Aorta (tissue), 5 donors: ENCODE measurements at regions of chr20 and their contacts with region 1.

Region 1: GRCh38 chr20:58888521-58889333 is 36.2 kb downstream of the GNAS start:
- DNase-seq: peak; percentile 89 to 93
- ATAC-seq: peak; percentile 71
- H3K4me3 ChIP-seq: peak overlapping the region; percentile 37 to 95
- H3K27ac ChIP-seq: peak overlapping the region in 1 of 2 donors; percentile 52
- H3K4me1 ChIP-seq: no peaks in the 10 kb centered on the region
- H3K27me3 ChIP-seq: peaks cover 0 to 1% of the 10 kb centered on the region in 2 donors

Region 2: GRCh38 chr20:58538752-58539151 is 350.0 kb before region 1 on chr20:
- intact Hi-C with region 1: no loop called
- DNase-seq: no peak
- ATAC-seq: no peak
- H3K4me3 ChIP-seq: no peak overlapping the region
- H3K27ac ChIP-seq: no peak overlapping the region
- H3K4me1 ChIP-seq: no peaks in the 10 kb centered on the region
- H3K27me3 ChIP-seq: no peaks in the 10 kb centered on the region

Region 3: DNA sequence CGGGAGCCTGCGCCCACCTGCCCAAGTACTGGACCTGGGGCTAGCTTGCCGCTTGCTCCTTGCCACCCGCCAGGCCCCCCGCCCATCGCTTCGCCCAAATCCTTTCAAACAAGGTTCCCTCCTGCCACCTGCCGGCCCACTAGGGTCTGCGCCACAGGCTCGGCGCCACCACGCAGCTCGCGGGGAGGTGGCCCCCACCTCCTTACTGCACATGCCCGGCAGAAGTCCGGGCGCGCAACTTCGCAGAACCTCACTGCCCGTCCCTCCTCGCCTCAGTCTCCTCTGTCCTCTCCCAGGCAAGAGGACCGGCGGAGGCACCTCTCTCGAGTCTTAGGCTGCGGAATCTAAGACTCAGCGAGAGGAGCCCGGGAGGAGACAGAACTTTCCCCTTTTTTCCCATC is 49.3 kb before region 1 on chr20:
- intact Hi-C with region 1: no loop called
- DNase-seq: peak in 1 of 2 donors; percentile 78
- ATAC-seq: peak; percentile 36
- H3K4me3 ChIP-seq: no peak overlapping the region
- H3K27ac ChIP-seq: no peak overlapping the region
- H3K4me1 ChIP-seq: no peaks in the 10 kb centered on the region
- H3K27me3 ChIP-seq: no peaks in the 10 kb centered on the region

Region 4: GRCh38 chr20:58907399-58908137 is 18.8 kb after region 1 on chr20:
- intact Hi-C with region 1: loop called in 1 of 2 experiments (anchors 2 kb)
- DNase-seq: peak; percentile 89 to 94
- ATAC-seq: peak; percentile 95
- H3K4me3 ChIP-seq: no peak overlapping the region
- H3K27ac ChIP-seq: peak overlapping the region; percentile 54 to 88
- H3K4me1 ChIP-seq: no peaks in the 10 kb centered on the region
- H3K27me3 ChIP-seq: no peaks in the 10 kb centered on the region

Region 5: GRCh38 chr20:58980700-58981627 is 92.2 kb after region 1 on chr20 and contains the start of gene NELFCD:
- intact Hi-C with region 1: loop called (anchors 5 kb)
- DNase-seq: peak; percentile 92 to 97
- ATAC-seq: peak; percentile 94
- H3K4me3 ChIP-seq: peak within 1 kb of the TSS; percentile 80 to 87
- H3K27ac ChIP-seq: no peak within 1 kb of the TSS
- H3K4me1 ChIP-seq: peaks cover 0 to 4% of the 10 kb centered on the region in 2 donors
- H3K27me3 ChIP-seq: no peaks in the 10 kb centered on the region
- total RNA-seq, gene NELFCD: 40.5 to 50.1 TPM

Region 6: DNA sequence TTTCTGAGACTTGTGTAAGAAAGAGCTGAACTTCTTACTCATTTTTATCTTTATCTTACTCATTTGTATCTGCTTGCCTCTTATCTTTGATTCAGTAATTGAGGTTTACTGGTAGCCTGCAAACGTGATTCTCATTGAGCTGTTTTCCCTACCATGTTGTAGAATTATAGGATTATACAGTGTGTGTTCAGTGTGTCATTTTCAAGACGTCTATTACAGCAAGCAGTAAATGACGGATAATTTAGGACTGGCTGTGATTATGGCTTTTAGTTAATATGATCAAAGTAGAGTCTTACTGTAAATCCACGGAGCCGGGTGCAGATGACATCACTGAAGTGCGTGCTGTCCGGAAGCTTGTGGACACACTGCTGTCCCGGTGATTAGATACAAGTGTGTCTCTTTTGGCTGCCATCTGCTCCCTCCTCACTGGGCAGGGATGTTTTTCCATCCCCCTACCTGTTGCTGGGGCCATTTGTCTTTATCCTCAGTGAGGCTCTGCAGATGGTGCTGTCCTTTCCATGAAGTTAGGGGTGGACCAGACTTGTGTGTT is 98.3 kb after region 1 on chr20:
- intact Hi-C with region 1: loop called (anchors 5 kb)
- DNase-seq: no peak
- ATAC-seq: no peak
- H3K4me3 ChIP-seq: no peak overlapping the region
- H3K27ac ChIP-seq: no peak overlapping the region
- H3K4me1 ChIP-seq: peaks cover 0 to 4% of the 10 kb centered on the region in 2 donors
- H3K27me3 ChIP-seq: no peaks in the 10 kb centered on the region

Region 7: DNA sequence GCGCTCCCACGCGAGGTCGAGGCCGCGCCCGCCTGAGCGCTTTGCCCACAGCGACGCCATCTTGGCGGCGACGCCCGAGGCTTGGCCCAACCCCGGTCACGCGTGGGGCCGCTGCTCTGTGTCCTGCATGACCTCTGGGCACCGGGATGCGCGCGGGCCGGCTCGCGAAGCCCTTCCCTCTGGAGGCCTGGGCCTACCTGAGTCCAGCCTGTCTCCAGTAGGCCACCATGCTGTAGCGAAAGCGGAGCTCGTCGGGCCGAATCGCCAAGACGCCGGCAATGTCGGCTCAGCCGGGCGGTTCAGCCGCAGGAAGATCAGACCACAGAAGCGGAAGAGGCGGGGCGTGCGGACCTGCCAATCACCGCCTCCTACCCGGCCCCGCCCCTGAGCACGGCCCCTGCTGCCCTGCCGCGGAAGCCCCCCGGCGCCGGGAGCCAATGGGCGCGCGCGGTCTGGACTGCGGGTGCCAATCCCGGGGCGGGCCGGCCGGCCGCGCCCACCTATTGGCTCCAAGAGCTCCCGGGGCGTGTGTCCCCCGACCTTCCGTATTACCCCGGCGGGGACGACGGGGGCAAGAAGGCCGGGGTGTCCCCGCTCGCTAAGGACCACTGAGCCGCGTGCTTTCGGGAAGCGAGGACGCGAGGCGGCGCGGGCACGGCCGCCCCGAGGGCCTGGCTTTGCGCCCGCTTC is 143.4 kb after region 1 on chr20 and contains the start of gene ATP5F1E:
- intact Hi-C with region 1: loop called in 1 of 2 experiments (anchors 5 kb)
- DNase-seq: peak; percentile 98
- ATAC-seq: peak; percentile 100
- H3K4me3 ChIP-seq: peak within 1 kb of the TSS; percentile 52 to 78
- H3K27ac ChIP-seq: peak within 1 kb of the TSS; percentile 24 to 71
- H3K4me1 ChIP-seq: peaks cover 0 to 5% of the 10 kb centered on the region in 2 donors
- H3K27me3 ChIP-seq: no peaks in the 10 kb centered on the region
- total RNA-seq, gene ATP5F1E: 48.2 to 50.1 TPM

Region 8: DNA sequence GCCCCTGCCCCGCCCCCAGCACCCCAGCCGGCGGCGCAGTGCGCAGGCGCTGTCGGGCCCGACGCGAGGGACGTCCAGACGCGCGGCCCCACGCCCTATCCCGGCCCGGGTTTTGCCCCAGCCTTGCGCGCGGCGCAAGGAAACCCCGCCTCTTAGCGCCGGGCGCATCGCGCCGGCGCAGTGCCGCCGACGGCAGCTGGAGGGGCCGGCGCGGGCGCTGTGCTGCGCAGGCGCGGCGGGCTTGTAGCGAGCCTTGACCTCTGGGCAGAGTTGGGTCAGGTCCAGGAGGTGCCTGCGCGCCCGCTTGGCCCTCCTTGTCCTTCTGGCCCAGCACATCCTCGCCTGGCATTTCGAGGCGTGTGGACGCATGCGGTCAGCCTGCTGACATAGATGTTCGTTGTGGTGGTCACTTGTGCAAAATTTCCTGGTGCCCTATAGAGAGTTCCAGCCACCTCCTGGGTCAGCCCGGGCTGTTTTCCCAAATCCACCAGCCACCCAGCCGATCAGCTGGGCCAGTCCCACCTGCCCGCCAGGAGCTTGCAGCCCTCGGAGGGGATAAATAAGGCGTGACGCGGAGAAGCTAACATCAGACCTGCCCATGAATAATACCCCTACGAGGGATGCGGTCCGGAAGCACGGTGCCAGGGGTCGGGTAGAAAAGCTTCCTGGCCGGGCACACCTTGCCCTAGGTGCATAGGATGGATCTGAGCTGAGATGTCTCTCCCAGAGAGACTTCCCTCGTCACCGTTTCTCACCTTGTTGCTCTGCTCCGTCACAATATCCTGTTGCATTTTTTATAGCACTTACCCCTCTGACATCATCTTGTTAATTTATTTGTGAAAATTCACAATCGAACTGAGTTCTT is 154.3 kb after region 1 on chr20:
- intact Hi-C with region 1: loop called in 1 of 2 experiments (anchors 5 kb)
- DNase-seq: peak; percentile 96 to 98
- ATAC-seq: peak; percentile 98
- H3K4me3 ChIP-seq: peak overlapping the region; percentile 51 to 88
- H3K27ac ChIP-seq: peak overlapping the region in 1 of 2 donors; percentile 48
- H3K4me1 ChIP-seq: no peaks in the 10 kb centered on the region
- H3K27me3 ChIP-seq: no peaks in the 10 kb centered on the region

Region 9: GRCh38 chr20:59149651-59150504 is 261.2 kb after region 1 on chr20:
- intact Hi-C with region 1: loop called in 1 of 2 experiments (anchors 10 kb)
- DNase-seq: no peak
- ATAC-seq: peak; percentile 35
- H3K4me3 ChIP-seq: no peak overlapping the region
- H3K27ac ChIP-seq: no peak overlapping the region
- H3K4me1 ChIP-seq: peaks cover 0 to 3% of the 10 kb centered on the region in 2 donors
- H3K27me3 ChIP-seq: no peaks in the 10 kb centered on the region